PC-9 (cell line): ENCODE measurements at regions of chr12 and their contacts with region 1.

Region 1: GRCh38 chr12:50517456-50518048 is 12.8 kb downstream of the DIP2B start:
- DNase-seq: no peak
- H3K4me3 ChIP-seq: no peak overlapping the region
- H3K27ac ChIP-seq: peak overlapping the region; percentile 67
- H3K4me1 ChIP-seq: peaks cover 8% of the 10 kb centered on the region; the same call in 1 of the 2 replicates
- H3K27me3 ChIP-seq: no peaks in the 10 kb centered on the region
- CTCF ChIP-seq: no peak

Region 2: DNA sequence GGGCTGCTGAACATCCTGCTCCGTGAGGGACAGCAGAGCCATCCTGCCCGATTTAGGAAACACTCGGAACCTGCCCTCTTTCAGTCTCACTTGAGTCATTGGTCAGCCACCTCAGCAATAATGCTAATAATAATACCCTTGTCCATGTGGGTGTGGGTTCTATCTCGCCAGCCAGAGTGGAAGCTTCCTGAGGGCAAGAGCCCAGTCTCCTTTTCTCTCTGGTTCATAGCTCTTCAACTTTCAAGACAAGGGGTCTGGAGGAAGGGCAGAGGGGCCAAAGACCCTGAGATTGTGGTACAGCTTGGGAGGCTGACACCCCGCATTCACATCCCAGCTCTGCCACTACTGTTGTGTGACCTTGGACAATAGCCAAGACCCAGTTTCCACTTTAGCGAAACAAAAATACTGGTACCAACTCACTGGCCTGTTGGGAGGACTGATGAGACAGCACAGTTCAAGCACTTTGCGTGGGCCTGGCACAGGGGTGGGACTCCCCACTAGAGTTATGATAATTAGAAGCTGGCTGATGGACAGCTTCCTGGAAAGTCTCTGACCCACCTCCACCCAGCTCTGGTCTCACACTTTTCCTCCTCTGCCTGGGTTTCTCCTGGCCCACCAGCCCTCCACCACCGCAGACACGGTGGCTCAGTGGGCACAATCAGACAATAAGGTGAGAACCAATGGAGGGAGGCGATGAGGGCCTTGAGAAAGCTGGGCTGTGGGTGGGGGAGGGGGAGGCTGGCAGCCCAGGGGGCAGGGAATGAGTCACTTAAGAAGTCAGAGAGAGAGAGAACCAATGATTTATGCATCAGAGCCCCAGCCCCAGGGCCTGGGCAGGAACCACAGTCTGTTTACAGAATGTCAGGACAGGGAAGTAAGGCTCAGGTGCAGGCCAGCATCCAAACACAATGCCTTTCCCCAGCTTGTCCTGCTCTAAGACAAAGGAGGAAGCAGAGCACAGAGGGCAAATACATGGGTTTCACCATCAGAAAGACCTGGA is 623.5 kb before region 1 on chr12:
- CTCF ChIA-PET with region 1: no interaction called
- POLR2A ChIA-PET with region 1: no interaction called
- intact Hi-C with region 1: no loop called
- DNase-seq: peak; percentile 73 to 94
- H3K4me3 ChIP-seq: no peak overlapping the region
- H3K27ac ChIP-seq: peak overlapping the region; percentile 36; the same call in 1 of the 2 replicates
- H3K4me1 ChIP-seq: peaks cover 20% of the 10 kb centered on the region
- H3K27me3 ChIP-seq: peaks cover 5% of the 10 kb centered on the region; the same call in 1 of the 2 replicates
- CTCF ChIP-seq: no peak

Region 3: DNA sequence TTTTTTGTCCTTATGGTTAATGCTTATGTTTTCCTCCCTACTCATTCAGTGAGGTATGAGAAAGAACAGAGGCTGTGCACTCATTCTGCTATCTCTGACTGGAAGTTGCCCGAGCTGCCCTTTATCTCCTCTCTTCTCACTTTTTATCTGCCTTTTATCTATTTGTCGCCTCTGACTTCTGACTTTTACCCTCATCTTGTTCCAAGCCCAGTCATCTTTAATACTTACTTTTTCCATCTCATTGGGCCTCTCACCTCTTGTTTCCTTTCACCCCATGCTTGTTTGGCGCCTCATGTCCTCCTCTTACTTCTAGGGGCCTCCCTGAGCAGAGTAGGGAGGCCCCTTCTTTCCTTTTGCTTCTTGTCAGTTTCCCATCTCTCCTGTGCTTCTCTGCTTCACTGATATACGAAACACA is 37.9 kb after region 1 on chr12:
- CTCF ChIA-PET with region 1: no interaction called
- POLR2A ChIA-PET with region 1: interaction called, 14 read pairs
- intact Hi-C with region 1: no loop called
- DNase-seq: no peak
- H3K4me3 ChIP-seq: no peak overlapping the region
- H3K27ac ChIP-seq: peak overlapping the region; percentile 77
- H3K4me1 ChIP-seq: peaks cover 39% of the 10 kb centered on the region
- H3K27me3 ChIP-seq: no peaks in the 10 kb centered on the region
- CTCF ChIP-seq: no peak

Region 4: GRCh38 chr12:50572271-50572670 is 54.7 kb after region 1 on chr12:
- CTCF ChIA-PET with region 1: no interaction called
- POLR2A ChIA-PET with region 1: interaction called, 10 read pairs
- intact Hi-C with region 1: no loop called
- DNase-seq: peak; percentile 24 to 91
- H3K4me3 ChIP-seq: no peak overlapping the region
- H3K27ac ChIP-seq: peak overlapping the region; percentile 54
- H3K4me1 ChIP-seq: peaks cover 52% of the 10 kb centered on the region
- H3K27me3 ChIP-seq: no peaks in the 10 kb centered on the region
- CTCF ChIP-seq: no peak

Region 5: DNA sequence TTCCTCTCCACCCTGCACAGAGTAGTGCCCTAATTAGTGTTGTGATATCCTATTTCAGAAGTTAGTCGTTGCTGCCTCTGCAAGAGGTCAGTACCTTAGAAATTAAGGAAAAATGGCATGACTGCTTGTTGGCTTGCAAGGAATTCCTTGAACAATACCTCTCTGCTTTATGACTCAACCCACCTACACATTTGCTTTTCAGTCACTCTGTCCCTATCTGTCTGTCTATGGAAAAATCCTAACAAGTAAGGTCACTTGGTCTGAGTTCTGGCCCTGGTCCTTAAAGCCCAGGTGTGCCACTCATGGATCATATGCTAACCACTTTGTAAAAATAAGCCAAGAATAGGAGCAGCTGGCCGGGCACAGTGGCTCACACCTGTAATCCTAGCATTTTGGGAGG is 129.9 kb after region 1 on chr12:
- CTCF ChIA-PET with region 1: no interaction called
- POLR2A ChIA-PET with region 1: no interaction called
- intact Hi-C with region 1: no loop called
- DNase-seq: peak in 1 of 2 experiments; percentile 14
- H3K4me3 ChIP-seq: no peak overlapping the region
- H3K27ac ChIP-seq: no peak overlapping the region
- H3K4me1 ChIP-seq: peaks cover 4% of the 10 kb centered on the region
- H3K27me3 ChIP-seq: no peaks in the 10 kb centered on the region
- CTCF ChIP-seq: no peak